HCT116 (cell line): ENCODE measurements at regions of chr4 and their contacts with region 1.

Region 1: GRCh38 chr4:171846232-171846631 is 33.0 kb downstream of the GALNTL6 start:
- DNase-seq: peak; percentile 42
- ATAC-seq: peak; percentile 86
- H3K4me3 ChIP-seq: no peak overlapping the region
- H3K27ac ChIP-seq: no peak overlapping the region
- H3K4me1 ChIP-seq: no peaks in the 10 kb centered on the region
- H3K27me3 ChIP-seq: no peaks in the 10 kb centered on the region
- CTCF ChIP-seq: peak; percentile 62 to 81 (median 75)
- POLR2A ChIP-seq: no peak
- RAD21 ChIP-seq: peak; percentile 86

Region 2: GRCh38 chr4:171785388-171785787 is 60.8 kb before region 1 on chr4:
- CTCF ChIA-PET with region 1: no interaction called
- POLR2A ChIA-PET with region 1: no interaction called
- RAD21 ChIA-PET with region 1: no interaction called
- intact Hi-C with region 1: no loop called
- DNase-seq: no peak
- ATAC-seq: no peak
- H3K4me3 ChIP-seq: no peak overlapping the region
- H3K27ac ChIP-seq: no peak overlapping the region
- H3K4me1 ChIP-seq: no peaks in the 10 kb centered on the region
- H3K27me3 ChIP-seq: no peaks in the 10 kb centered on the region
- CTCF ChIP-seq: no peak
- POLR2A ChIP-seq: no peak
- RAD21 ChIP-seq: peak; percentile 26; the same call in 1 of the 2 replicates

Region 3: DNA sequence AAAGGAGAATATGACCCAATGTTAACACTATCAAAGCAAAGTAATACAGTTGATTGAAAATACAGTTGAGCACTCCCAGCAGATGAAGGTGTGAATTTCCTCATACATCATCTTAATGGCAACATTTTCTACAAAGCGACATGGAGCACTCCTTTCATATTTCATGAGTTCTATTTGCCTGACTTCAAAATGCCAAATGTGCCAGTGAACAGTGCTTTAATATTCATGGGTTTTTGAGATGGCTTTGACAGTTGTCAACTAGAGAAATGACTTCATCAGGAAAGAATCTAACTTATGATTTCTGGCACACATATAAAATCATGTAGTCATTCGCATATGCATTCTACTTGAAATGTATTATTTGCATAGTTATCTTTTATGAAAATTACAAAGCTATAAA is 189.3 kb after region 1 on chr4:
- CTCF ChIA-PET with region 1: no interaction called
- POLR2A ChIA-PET with region 1: no interaction called
- RAD21 ChIA-PET with region 1: no interaction called
- intact Hi-C with region 1: loop called (anchors 5 kb)
- DNase-seq: no peak
- ATAC-seq: no peak
- H3K4me3 ChIP-seq: no peak overlapping the region
- H3K27ac ChIP-seq: no peak overlapping the region
- H3K4me1 ChIP-seq: no peaks in the 10 kb centered on the region
- H3K27me3 ChIP-seq: no peaks in the 10 kb centered on the region
- CTCF ChIP-seq: no peak
- POLR2A ChIP-seq: no peak
- RAD21 ChIP-seq: no peak

Region 4: DNA sequence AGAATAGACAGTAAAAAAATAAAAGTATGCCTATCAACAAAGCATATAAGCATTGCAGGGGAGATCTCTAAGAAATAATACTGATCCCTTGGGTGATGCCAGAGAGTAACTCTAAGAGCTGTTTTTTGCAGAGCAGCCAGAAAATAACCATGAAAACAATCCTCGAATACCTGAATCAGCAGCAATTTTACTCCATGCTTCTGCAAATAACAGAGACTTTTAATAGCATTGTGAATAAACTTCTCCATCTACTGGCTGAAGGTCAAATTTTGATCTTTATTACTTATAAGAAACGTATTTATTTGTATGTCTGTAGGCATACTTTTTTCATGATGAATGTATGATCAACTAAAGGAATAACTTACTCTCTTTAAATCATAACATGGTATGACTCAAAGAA is 301.5 kb after region 1 on chr4:
- CTCF ChIA-PET with region 1: interaction called, 3 read pairs
- POLR2A ChIA-PET with region 1: no interaction called
- RAD21 ChIA-PET with region 1: no interaction called
- intact Hi-C with region 1: loop called (anchors 1 kb)
- DNase-seq: no peak
- ATAC-seq: no peak
- H3K4me3 ChIP-seq: no peak overlapping the region
- H3K27ac ChIP-seq: no peak overlapping the region
- H3K4me1 ChIP-seq: peaks cover 0 to 4% of the 10 kb centered on the region in 2 experiments; a peak in 2 of 4 replicates
- H3K27me3 ChIP-seq: no peaks in the 10 kb centered on the region
- CTCF ChIP-seq: peak in 1 of 3 experiments; percentile 21; a peak in 1 of 6 replicates
- POLR2A ChIP-seq: no peak
- RAD21 ChIP-seq: peak; percentile 47

Region 5: DNA sequence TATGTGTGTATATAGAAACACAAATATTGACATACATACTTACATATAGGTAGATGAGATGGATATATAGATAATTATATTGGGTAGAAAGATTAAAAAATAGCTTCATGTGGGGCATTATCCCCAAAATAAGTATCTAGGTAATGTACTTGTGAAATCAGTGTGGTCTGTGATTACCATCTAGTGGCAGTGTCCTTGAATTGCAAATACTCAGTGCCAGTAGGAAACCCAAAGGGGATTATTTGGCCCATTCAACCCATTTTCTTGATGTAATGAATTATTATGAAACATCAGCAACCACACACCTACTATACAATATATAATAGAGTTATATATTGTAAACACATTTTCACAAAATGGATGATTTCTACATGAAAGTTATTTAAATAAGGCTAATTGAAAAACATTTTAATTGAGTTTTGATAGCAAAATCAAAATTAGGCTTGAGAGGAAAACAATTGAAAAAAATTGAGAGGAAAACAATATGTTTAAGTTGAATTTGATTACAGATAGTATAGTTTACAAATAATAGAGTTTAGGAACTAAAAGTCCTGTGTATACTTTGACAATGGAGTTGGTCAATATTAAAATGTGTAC is 356.3 kb after region 1 on chr4:
- CTCF ChIA-PET with region 1: interaction called, 4 read pairs
- POLR2A ChIA-PET with region 1: no interaction called
- RAD21 ChIA-PET with region 1: no interaction called
- intact Hi-C with region 1: loop called (anchors 1 kb)
- DNase-seq: peak; percentile 32
- ATAC-seq: peak; percentile 67
- H3K4me3 ChIP-seq: no peak overlapping the region
- H3K27ac ChIP-seq: no peak overlapping the region
- H3K4me1 ChIP-seq: no peaks in the 10 kb centered on the region
- H3K27me3 ChIP-seq: no peaks in the 10 kb centered on the region
- CTCF ChIP-seq: peak; percentile 56 to 75 (median 63)
- POLR2A ChIP-seq: no peak
- RAD21 ChIP-seq: peak; percentile 83

Region 6: DNA sequence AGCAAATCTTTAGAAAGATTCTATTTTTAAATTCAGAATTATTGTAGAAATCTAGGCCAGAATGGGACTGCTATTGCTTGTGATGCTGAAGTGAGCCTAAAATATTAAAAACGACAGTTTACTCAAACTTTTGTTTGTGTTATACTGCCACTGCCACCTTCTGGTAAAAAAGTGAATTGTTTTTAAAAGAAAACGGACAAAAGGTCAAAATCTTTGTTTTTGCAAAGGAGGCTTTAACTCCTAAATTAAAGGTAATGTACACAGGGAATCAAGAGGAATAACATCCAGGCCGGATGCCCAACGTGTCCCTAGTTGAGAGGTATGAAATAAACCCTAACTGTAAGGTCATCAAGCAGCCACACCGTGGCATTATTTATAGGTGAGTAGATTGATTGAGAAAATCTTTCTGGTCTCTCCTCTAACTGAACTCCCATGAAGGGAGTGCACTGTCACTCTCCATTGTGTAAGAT is 984.1 kb after region 1 on chr4:
- CTCF ChIA-PET with region 1: interaction called, 3 read pairs
- POLR2A ChIA-PET with region 1: no interaction called
- RAD21 ChIA-PET with region 1: no interaction called
- intact Hi-C with region 1: loop called (anchors 5 kb)
- DNase-seq: peak; percentile 13
- ATAC-seq: no peak
- H3K4me3 ChIP-seq: no peak overlapping the region
- H3K27ac ChIP-seq: no peak overlapping the region
- H3K4me1 ChIP-seq: peaks cover 0 to 12% of the 10 kb centered on the region in 2 experiments; a peak in 2 of 4 replicates
- H3K27me3 ChIP-seq: no peaks in the 10 kb centered on the region
- CTCF ChIP-seq: peak; percentile 20 to 67 (median 53); a peak in 4 of 6 replicates
- POLR2A ChIP-seq: no peak
- RAD21 ChIP-seq: peak; percentile 69